B cell (primary cell): ENCODE measurements at regions of chr17 and their contacts with region 1.

Region 1: DNA sequence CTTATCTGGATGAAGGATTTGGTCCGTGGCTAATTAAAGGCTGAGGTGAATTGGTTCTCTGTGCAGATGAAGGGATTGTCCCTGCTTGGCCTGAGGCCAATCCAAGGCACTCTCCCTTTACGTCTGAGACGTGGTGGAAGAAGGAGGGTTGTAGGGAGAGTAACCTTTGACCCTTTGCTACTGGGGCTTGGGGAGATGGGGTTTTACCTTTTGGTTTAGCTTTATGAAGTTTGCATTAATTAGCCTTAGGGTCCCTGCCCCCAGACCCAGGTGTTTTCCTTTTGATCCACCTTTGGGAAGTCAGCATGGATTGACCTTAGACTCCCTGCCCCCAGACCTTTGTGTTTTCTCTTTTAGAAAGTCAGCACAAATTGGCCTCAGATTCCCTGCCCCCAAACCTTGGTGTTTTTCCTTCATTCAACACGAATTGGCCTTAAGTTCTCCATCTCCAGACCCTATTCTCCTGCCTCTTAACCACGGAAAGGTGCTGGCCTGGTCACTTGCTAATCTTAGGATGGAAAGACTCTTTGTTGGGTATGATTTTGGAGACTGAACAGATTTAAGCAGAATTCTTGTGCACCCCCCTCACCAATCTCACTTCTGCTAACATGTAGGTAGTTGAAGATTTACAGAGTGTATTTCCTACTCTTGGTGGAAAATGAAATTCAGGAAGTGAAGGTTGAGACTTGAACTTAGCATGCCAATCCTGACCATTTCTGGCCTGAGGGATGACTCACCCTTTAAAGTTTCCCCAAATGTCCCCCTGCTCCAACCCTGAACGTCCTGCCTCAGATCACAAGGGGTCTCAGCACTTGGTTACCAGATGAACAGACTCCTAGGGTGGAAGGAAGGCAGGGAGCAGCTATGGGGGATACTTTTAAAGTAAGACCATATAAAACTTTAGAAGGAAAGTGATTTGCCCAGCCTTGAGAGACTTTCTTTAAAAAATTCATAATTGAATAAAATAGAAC is 23.1 kb upstream of the MMD start:
- DNase-seq: peak; percentile 45
- ATAC-seq: peak; percentile 77
- H3K4me3 ChIP-seq: no peak overlapping the region
- H3K4me3 Mint-ChIP-seq: peak overlapping the region; percentile 46
- H3K27ac ChIP-seq: no peak overlapping the region
- H3K27ac Mint-ChIP-seq: peak overlapping the region; percentile 69
- H3K4me1 ChIP-seq: peaks cover 13% of the 10 kb centered on the region in 2 donors
- H3K4me1 Mint-ChIP-seq: peaks cover 18% of the 10 kb centered on the region
- H3K27me3 ChIP-seq: peaks cover 0 to 13% (median 6%) of the 10 kb centered on the region in 4 experiments
- H3K27me3 Mint-ChIP-seq: peaks cover 4% of the 10 kb centered on the region
- CTCF ChIP-seq: no peak

Region 2: DNA sequence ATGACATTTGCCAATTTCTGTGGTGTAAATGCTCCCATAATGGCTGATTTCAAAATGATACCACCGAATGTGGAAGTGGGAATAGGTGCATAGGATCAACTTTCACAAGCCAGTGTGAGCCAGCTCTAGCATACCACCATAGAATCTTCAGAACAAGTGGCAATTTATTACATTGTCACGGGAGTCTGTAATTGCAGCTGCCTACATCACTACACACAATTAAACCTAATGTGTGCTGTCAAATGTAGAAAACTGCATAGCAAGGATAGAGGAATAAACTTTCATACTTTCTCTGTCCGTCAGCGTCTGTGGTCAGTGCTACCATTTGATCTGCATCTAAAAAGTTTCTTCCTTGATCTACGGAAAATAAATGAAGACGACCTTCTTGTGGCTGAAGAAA is 961.9 kb before region 1 on chr17:
- CTCF ChIA-PET with region 1: no interaction called
- POLR2A ChIA-PET with region 1: no interaction called
- intact Hi-C with region 1: no loop called
- DNase-seq: no peak
- ATAC-seq: no peak
- H3K4me3 ChIP-seq: no peak overlapping the region
- H3K4me3 Mint-ChIP-seq: no peak overlapping the region
- H3K27ac ChIP-seq: no peak overlapping the region
- H3K27ac Mint-ChIP-seq: no peak overlapping the region
- H3K4me1 ChIP-seq: no peaks in the 10 kb centered on the region
- H3K4me1 Mint-ChIP-seq: no peaks in the 10 kb centered on the region
- H3K27me3 ChIP-seq: no peaks in the 10 kb centered on the region
- H3K27me3 Mint-ChIP-seq: no peaks in the 10 kb centered on the region
- CTCF ChIP-seq: no peak

Region 3: DNA sequence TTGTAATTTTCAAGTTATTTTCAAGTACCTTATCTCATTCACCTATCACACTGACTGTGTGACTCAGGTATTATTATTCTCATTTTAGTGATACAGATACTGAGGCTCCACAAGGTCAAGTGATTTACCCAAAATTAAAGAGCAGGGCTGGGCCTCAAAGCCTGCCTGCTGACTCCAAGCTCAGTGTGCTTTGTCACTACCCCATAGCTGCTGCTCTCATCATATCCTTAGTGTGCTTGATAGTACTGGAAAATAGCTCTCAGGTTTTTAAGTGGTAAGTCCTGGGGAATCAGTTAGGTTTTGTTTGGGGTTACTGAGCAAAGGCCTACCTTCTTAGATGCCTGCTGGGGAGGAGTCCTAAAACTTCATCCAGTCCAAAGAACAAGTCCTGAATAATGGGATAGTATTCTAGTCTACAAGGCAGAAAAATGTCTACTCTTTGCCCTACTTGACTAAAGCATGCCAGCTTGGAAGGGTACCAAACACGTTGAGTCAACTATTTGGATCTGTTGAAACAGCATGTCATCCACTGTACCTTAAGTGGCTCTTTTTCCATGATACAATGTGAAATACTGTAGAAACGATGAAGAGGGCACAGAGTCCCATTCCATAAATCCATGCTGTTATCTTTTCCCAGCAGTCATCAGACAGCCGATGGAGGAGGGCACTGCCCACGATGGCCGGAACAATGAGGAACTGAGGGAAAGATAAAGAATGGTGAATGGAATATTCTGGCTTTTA is 33.9 kb before region 1 on chr17:
- CTCF ChIA-PET with region 1: no interaction called
- POLR2A ChIA-PET with region 1: interaction called, 3 read pairs
- intact Hi-C with region 1: loop called (anchors 5 kb)
- DNase-seq: no peak
- ATAC-seq: no peak
- H3K4me3 ChIP-seq: no peak overlapping the region
- H3K4me3 Mint-ChIP-seq: no peak overlapping the region
- H3K27ac ChIP-seq: no peak overlapping the region
- H3K27ac Mint-ChIP-seq: no peak overlapping the region
- H3K4me1 ChIP-seq: no peaks in the 10 kb centered on the region
- H3K4me1 Mint-ChIP-seq: peaks cover 9% of the 10 kb centered on the region
- H3K27me3 ChIP-seq: no peaks in the 10 kb centered on the region
- H3K27me3 Mint-ChIP-seq: no peaks in the 10 kb centered on the region
- CTCF ChIP-seq: no peak

Region 4: DNA sequence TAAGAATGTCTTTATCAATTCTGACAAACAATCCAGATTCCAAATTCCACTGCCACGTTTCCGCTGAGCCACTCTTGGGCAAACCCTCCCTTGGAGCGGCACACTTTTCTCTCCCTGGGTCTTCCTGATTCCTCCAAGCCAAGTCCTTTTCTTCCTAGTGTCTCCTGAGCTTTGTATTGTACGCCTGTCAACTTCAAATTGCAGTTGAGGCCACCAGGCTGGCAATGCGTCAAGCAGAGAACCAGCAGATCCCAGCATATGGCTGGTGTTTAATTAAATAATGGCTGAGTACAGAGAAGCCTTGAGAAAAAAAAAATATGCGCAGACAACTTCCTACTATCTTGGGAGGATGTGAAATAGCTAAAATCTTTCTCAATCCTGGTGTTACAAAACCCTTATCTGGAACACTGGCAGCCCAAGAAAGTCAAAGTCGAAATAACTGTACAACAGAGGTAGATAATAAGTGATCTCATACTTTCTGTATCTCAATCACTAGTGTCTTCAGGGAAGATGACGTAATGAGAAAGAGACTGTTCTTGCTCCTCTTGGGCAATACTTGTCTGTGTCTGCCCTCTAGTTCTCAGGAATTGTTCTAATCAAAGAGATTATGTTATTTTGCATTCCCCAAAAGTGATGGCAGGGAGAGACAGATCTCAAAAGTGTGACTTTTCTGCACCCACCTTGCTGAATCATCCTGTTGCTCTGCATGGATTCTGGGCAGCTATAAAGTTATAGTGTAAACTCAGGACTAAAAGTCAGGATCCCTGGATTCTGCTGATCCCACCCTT is 51.5 kb after region 1 on chr17:
- CTCF ChIA-PET with region 1: no interaction called
- POLR2A ChIA-PET with region 1: no interaction called
- intact Hi-C with region 1: no loop called
- DNase-seq: no peak
- ATAC-seq: no peak
- H3K4me3 ChIP-seq: no peak overlapping the region
- H3K4me3 Mint-ChIP-seq: no peak overlapping the region
- H3K27ac ChIP-seq: no peak overlapping the region
- H3K27ac Mint-ChIP-seq: no peak overlapping the region
- H3K4me1 ChIP-seq: no peaks in the 10 kb centered on the region
- H3K4me1 Mint-ChIP-seq: no peaks in the 10 kb centered on the region
- H3K27me3 ChIP-seq: peaks cover 0 to 3% (median 0%) of the 10 kb centered on the region in 4 experiments
- H3K27me3 Mint-ChIP-seq: peaks cover 24% of the 10 kb centered on the region
- CTCF ChIP-seq: no peak

Region 5: GRCh38 chr17:55652114-55652823 is 207.5 kb after region 1 on chr17:
- CTCF ChIA-PET with region 1: no interaction called
- POLR2A ChIA-PET with region 1: no interaction called
- intact Hi-C with region 1: no loop called
- DNase-seq: no peak
- ATAC-seq: no peak
- H3K4me3 ChIP-seq: no peak overlapping the region
- H3K4me3 Mint-ChIP-seq: no peak overlapping the region
- H3K27ac ChIP-seq: no peak overlapping the region
- H3K27ac Mint-ChIP-seq: no peak overlapping the region
- H3K4me1 ChIP-seq: no peaks in the 10 kb centered on the region
- H3K4me1 Mint-ChIP-seq: no peaks in the 10 kb centered on the region
- H3K27me3 ChIP-seq: no peaks in the 10 kb centered on the region
- H3K27me3 Mint-ChIP-seq: peaks cover 14% of the 10 kb centered on the region
- CTCF ChIP-seq: no peak